ENCODE measurements at regions of chr10 and their contacts with region 1.

Region 1: DNA sequence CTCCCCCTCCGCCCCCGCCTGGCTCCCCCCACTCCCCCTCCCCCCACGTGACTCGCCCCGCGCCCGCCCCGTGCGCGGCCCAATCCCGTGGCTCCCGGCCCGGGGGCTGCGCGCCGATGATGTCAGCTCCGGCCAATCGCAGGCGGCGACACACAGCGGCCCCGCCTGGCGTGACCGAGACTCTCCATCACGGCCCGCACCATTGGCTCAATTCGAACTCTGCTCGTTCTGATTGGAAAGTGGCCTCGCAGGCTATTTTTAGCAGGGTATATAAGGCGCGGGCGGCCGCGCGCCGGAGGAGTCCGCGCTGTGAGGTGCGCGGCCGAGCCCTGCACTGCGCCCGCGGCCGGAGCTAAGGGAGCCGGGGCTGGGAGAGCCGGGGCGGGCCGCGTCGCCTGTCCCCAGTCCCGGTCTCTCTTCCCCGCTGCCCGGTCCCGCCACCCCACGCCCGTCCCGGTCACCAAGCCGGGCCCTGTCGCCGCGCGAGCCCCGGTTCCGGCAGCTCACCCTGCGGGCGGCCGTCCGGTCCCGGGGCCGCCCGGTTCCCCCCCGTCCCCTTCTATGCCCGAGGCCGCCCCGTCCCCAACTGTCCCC is 345 bp upstream of the KLF6 start:
- DNase-seq: peak; percentile 91
- ATAC-seq: peak; percentile 48
- H3K4me3 ChIP-seq: peak overlapping the region; percentile 96
- H3K27ac ChIP-seq: peak overlapping the region; percentile 93
- H3K4me1 ChIP-seq: peaks cover 23% of the 10 kb centered on the region
- H3K27me3 ChIP-seq: no peaks in the 10 kb centered on the region
- CTCF ChIP-seq: no peak

Region 2: DNA sequence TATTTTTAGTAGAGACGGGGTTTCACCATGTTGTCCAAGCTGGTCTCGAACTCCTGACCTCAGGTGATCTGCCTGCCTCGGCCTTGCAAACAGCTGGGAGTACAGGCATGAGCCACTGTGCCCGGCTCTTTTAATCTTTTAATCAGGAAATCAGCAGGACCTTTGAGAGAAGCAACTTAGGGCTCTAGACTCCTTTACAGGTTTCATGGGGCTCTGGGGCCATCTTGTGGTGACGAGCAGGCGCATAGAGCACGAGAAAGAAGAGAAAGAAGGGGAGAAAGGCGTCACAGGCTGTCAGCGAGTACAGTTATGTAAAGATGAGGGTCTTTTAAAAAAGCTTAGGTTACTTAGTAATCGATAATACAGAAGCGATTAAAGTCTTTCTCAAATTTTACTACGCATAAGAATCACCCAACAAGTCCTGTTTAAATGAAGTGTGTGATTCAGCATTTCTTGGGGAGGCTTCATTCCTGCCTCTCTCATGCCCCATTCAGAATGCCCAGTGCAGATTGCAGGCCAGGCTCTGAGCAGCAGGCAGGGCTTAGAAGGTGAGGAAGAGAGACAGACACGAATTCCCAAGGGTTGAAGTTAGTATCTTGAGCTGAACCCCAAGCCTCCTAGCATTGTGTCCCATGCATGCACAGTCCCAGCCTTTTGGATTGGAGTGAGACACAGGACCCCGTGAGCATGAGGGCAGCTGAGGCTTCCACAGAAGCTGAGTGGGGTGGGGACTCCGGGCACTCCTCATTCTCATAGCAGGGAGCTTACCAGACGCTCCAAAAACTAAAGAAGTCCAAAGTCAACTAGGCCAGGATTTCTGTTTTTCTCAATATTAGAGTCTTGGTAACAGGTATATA is 741.6 kb before region 1 on chr10:
- CTCF ChIA-PET with region 1: no interaction called
- POLR2A ChIA-PET with region 1: no interaction called
- intact Hi-C with region 1: no loop called
- DNase-seq: peak; percentile 62
- ATAC-seq: peak; percentile 83
- H3K4me3 ChIP-seq: no peak overlapping the region
- H3K27ac ChIP-seq: no peak overlapping the region
- H3K4me1 ChIP-seq: peaks cover 13% of the 10 kb centered on the region
- H3K27me3 ChIP-seq: no peaks in the 10 kb centered on the region
- CTCF ChIP-seq: peak; percentile 70

Region 3: GRCh38 chr10:3625959-3626751 is 159.2 kb before region 1 on chr10:
- CTCF ChIA-PET with region 1: no interaction called
- POLR2A ChIA-PET with region 1: no interaction called
- intact Hi-C with region 1: no loop called
- DNase-seq: peak; percentile 61
- ATAC-seq: peak; percentile 53
- H3K4me3 ChIP-seq: no peak overlapping the region
- H3K27ac ChIP-seq: no peak overlapping the region
- H3K4me1 ChIP-seq: 0 out of 2 replicates have a peak, but pooled peaks cover 7% of the 10 kb centered on the region
- H3K27me3 ChIP-seq: no peaks in the 10 kb centered on the region
- CTCF ChIP-seq: no peak

Region 4: DNA sequence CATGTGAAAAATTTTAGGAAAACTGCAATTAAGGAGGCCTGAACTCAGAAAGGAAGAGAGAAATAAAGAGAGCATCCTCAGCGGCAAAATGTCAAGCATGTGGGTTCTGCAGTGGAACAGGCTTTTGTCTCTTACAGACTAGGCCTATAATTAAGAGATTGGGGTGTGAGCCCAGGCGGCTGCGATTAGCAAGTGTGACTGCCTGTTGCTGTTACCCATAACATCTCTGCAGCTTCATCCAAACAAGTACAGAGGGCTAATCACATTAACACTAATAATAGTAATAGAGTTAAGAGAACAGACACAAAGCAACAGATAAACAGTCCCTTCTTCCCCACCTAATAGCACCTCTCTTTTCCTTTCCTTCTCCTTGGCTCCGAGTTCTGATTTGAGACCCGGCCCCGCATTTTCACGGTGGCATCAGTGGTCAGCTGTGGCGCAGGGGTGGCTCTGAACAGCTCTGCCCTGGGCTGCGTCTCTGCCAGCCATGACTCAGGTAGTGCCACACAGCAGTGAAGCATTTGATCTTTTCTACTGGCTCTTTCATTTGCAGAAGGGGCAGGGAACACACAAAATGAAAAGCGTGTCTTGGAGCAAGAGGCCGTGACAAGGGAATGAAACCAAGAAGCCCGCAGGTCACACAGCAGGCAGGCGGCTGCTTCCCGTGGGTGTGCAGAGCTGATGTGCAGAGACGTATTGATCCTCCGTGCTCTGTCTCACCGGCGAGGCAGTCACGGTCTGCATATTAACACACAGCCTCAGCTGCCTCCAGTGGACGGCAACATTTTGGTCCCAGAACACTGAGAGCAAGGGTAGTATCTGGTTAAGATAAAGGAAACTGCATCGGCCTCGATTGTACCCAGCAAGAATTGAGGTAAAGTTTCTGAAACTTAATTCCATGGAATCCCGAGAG is 103.5 kb before region 1 on chr10:
- CTCF ChIA-PET with region 1: no interaction called
- POLR2A ChIA-PET with region 1: no interaction called
- intact Hi-C with region 1: no loop called
- DNase-seq: no peak
- ATAC-seq: no peak
- H3K4me3 ChIP-seq: no peak overlapping the region
- H3K27ac ChIP-seq: no peak overlapping the region
- H3K4me1 ChIP-seq: peaks cover 6% of the 10 kb centered on the region; the same call in 1 of the 2 replicates
- H3K27me3 ChIP-seq: no peaks in the 10 kb centered on the region
- CTCF ChIP-seq: no peak

Region 5: DNA sequence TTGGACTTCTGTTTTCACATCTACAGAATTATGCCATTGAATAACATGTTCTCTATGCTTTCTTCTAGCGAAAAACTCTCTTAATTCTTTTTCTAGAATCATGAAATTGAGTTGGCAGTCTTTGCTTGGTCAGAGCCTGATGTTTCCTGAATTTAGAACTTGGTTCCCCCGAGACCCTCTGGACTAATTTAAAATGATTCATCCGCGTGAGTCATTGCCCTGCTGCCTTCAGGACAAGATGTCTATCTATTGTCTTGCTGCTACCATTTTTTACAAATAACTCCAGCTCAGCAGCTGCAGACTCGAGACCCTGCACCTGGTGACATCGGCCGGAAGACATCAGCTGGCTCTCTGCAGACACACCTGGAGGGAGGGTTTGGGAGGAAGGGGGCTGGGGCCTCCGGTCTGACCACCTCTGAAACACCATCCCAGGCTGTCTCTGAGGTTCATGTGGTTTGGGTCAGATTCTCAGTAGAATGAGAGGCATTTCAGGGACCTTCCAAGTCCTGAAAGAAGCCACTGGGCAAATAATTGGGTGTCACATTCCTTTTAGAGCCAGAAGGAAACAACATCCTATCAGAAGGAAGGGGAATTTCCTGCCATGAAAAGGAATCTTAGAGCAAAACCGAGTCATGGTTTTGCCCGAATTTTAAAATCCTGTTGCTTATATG is 20.6 kb after region 1 on chr10:
- CTCF ChIA-PET with region 1: no interaction called
- POLR2A ChIA-PET with region 1: interaction called, 25 read pairs
- intact Hi-C with region 1: loop called (anchors 1 kb)
- DNase-seq: peak; percentile 77
- ATAC-seq: peak; percentile 29
- H3K4me3 ChIP-seq: peak overlapping the region; percentile 54; the same call in 1 of the 2 replicates
- H3K27ac ChIP-seq: peak overlapping the region; percentile 100
- H3K4me1 ChIP-seq: peaks cover 72% of the 10 kb centered on the region
- H3K27me3 ChIP-seq: no peaks in the 10 kb centered on the region
- CTCF ChIP-seq: no peak

Region 6: GRCh38 chr10:3828404-3829155 is 43.2 kb after region 1 on chr10:
- CTCF ChIA-PET with region 1: interaction called, 3 read pairs
- POLR2A ChIA-PET with region 1: interaction called, 13 read pairs
- intact Hi-C with region 1: no loop called
- DNase-seq: peak; percentile 31
- ATAC-seq: peak; percentile 20; the same call in 1 of the 2 replicates
- H3K4me3 ChIP-seq: peak overlapping the region; percentile 71
- H3K27ac ChIP-seq: peak overlapping the region; percentile 37
- H3K4me1 ChIP-seq: peaks cover 13% of the 10 kb centered on the region; the same call in 1 of the 2 replicates
- H3K27me3 ChIP-seq: no peaks in the 10 kb centered on the region
- CTCF ChIP-seq: no peak

Region 7: GRCh38 chr10:3895045-3895631 is 109.8 kb after region 1 on chr10:
- CTCF ChIA-PET with region 1: no interaction called
- POLR2A ChIA-PET with region 1: interaction called, 4 read pairs
- intact Hi-C with region 1: loop called (anchors 5 kb)
- DNase-seq: peak; percentile 49
- ATAC-seq: peak; percentile 76
- H3K4me3 ChIP-seq: no peak overlapping the region
- H3K27ac ChIP-seq: peak overlapping the region; percentile 85
- H3K4me1 ChIP-seq: peaks cover 38% of the 10 kb centered on the region
- H3K27me3 ChIP-seq: no peaks in the 10 kb centered on the region
- CTCF ChIP-seq: no peak

Region 8: DNA sequence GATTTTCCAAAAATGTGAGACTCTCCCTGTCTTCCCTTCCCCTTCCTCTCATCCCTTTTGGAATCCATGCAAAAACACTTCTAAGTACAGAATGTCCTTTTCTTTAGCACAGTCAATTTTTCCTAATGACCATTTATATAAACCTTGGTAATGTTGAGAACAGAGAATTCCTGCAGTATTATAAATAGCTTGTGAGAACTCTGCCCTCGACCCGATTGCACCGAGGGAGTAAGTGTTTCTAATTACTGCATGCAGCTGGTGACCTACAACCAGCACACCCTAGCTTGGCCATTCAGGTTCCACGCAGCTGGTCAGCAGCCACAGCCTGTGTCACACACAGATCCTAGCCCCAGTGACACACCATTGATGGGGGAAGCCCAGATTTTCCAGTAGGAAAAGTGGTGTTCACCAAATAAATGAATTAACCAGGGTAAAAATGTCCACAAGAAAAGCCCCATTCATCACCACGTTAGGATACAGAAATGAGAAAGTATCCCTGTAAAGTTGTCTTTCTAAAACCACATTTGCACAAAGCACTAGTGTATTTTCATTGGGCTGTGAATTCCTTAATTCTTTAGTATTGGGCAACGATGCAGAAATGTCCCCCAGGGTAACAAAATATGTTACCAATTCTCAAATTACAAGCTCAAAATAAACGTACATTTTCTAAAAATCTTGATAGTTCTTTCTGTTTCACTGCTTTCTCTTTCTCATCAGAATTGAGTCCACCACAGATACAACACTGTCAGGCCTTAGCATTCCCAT is 498.7 kb after region 1 on chr10:
- CTCF ChIA-PET with region 1: no interaction called
- POLR2A ChIA-PET with region 1: no interaction called
- intact Hi-C with region 1: loop called (anchors 5 kb)
- DNase-seq: no peak
- ATAC-seq: no peak
- H3K4me3 ChIP-seq: no peak overlapping the region
- H3K27ac ChIP-seq: no peak overlapping the region
- H3K4me1 ChIP-seq: peaks cover 29% of the 10 kb centered on the region
- H3K27me3 ChIP-seq: no peaks in the 10 kb centered on the region
- CTCF ChIP-seq: no peak

Region 9: DNA sequence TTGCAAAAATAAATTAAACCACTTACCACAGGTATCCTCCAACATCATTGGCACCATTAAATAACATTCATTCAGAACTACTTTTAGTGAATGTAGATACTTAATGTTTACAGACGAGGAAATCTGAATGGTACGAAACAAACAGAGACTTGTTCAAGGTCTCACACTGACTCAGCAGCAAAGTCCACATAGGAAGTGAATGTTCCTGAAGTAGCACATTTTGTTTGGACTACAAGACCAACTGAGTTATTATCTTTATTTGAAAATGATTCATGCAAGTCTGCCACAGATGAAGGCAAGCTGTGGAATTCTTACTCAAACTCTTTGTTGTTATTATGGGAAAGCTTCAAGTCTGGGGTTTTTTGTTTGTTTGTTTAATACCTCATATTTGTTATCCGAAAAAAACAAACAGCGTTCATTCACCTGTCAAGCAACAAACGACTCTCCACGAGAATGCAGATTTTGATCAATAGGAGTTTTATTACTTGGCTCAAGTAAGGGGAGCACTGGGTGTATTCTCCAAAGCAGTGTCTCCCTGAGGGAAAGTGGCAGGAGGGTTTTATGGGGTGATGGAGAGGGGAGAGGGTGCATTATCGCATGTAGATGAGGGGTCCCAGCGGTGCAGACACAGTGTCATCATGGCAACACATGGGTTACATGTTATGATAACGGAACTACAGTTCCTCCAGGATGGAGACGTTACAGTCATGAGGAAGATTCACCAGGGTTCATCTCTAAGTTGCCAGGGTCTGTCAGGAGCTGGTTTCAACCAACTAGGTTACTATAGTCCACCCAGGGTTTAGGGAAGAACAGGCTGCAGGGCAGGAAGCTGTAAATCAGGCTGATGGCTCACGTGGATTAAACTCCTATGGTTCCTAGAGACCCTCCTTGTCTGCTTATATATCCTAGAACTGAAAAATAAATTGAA is 892.9 kb after region 1 on chr10:
- CTCF ChIA-PET with region 1: no interaction called
- POLR2A ChIA-PET with region 1: no interaction called
- intact Hi-C with region 1: loop called (anchors 10 kb)
- DNase-seq: peak; percentile 80
- ATAC-seq: peak; percentile 87
- H3K4me3 ChIP-seq: peak overlapping the region; percentile 74
- H3K27ac ChIP-seq: peak overlapping the region; percentile 99
- H3K4me1 ChIP-seq: peaks cover 46% of the 10 kb centered on the region
- H3K27me3 ChIP-seq: no peaks in the 10 kb centered on the region
- CTCF ChIP-seq: no peak

Measured in PC-3 (cell line).